Natural killer cell (primary cell): ENCODE measurements at regions of chr3 and their contacts with region 1.

Region 1: DNA sequence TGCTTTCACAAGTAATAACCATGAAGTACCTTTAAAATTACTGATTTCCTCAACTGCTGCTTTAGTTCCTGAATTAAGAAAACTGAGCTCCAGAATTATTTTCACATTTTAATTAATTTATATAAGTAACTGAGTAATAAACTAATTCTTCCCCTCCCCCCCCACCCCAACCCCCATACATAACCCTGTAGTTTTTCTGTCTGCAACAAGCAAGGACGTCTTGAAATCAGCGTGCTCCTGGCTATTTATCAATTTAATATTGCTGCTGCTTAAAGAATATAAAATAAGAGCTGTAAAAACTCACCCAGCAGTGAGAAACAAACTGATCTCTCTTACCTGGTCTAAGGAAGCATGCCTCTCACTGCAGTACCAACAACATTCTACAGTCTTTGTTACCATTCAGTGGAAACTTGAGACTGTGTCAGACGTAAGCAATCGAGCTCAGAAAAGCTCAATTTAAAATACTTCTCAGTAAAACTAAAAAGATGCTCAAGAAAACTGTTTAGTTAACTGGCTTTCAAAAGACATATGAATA is 121.0 kb downstream of the TFDP2 start:
- DNase-seq: peak in 1 of 2 donors; percentile 74
- ATAC-seq: peak; percentile 72 to 79 (median 73)
- H3K4me3 ChIP-seq: peak overlapping the region; percentile 42
- H3K4me3 Mint-ChIP-seq: peak overlapping the region; percentile 96
- H3K27ac ChIP-seq: peak overlapping the region; percentile 30
- H3K27ac Mint-ChIP-seq: peak overlapping the region; percentile 87 to 91
- H3K4me1 ChIP-seq: peaks cover 3% of the 10 kb centered on the region
- H3K4me1 Mint-ChIP-seq: peaks cover 32 to 41% of the 10 kb centered on the region in 2 donors
- H3K27me3 ChIP-seq: no peaks in the 10 kb centered on the region
- H3K27me3 Mint-ChIP-seq: no peaks in the 10 kb centered on the region
- CTCF ChIP-seq: no peak

Region 2: DNA sequence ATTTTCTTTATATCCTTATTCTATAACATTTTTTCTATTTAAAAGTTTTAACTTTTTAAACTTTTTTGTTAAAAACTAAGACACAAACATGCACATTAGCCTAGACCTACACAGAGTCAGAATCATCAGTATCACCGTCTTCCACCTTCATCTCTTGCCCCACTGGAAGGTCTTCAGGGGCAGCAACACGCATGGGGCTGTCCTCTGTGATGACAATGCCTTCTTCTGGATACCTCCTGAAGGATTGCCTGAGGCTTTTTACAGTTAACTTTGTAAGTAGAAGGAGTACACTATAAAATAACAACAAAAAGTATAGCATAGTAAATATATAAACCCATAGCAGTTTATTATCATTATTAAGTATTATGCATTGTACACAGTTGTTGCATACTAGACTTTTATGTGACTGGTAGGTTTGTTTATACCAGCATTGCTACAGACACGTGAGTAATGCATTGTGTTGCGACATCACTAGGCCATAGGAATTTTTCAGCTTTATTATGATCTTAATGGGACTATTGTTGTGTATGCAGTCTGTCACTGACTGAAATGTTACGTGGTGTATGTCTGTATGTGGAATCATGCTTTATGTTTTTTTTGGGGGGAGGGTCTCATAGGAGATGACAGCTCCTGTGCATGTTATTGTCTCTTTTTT is 133.7 kb before region 1 on chr3:
- intact Hi-C with region 1: no loop called
- DNase-seq: no peak
- ATAC-seq: no peak
- H3K4me3 ChIP-seq: no peak overlapping the region
- H3K4me3 Mint-ChIP-seq: no peak overlapping the region
- H3K27ac ChIP-seq: no peak overlapping the region
- H3K27ac Mint-ChIP-seq: no peak overlapping the region
- H3K4me1 ChIP-seq: no peaks in the 10 kb centered on the region
- H3K4me1 Mint-ChIP-seq: peaks cover 15 to 21% of the 10 kb centered on the region in 2 donors
- H3K27me3 ChIP-seq: no peaks in the 10 kb centered on the region
- H3K27me3 Mint-ChIP-seq: no peaks in the 10 kb centered on the region
- CTCF ChIP-seq: no peak

Region 3: GRCh38 chr3:142098964-142099363 is 70.7 kb after region 1 on chr3:
- intact Hi-C with region 1: loop called (anchors 2 kb)
- DNase-seq: no peak
- ATAC-seq: no peak
- H3K4me3 ChIP-seq: no peak overlapping the region
- H3K4me3 Mint-ChIP-seq: no peak overlapping the region
- H3K27ac ChIP-seq: no peak overlapping the region
- H3K27ac Mint-ChIP-seq: no peak overlapping the region
- H3K4me1 ChIP-seq: no peaks in the 10 kb centered on the region
- H3K4me1 Mint-ChIP-seq: peaks cover 23 to 32% of the 10 kb centered on the region in 2 donors
- H3K27me3 ChIP-seq: no peaks in the 10 kb centered on the region
- H3K27me3 Mint-ChIP-seq: no peaks in the 10 kb centered on the region
- CTCF ChIP-seq: no peak

Region 4: DNA sequence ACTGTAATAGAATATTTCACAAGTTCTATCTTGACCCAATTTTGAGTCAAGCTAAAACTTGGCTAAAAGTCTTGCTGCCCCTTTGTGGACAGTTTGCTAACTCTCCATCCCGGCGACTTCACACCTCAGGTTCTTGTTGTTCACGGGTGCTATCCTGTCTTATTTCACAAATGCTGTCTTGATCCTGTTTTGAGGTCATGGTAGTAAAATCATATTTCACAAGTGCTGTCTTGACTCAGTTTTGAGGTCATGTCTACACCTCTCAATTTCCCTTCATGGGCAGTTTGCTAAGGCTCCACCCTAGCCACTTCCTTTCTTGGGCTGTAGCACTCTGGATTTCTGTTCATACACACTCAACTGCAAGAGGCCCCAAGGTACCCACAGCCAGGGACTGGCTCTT is 242.1 kb after region 1 on chr3:
- intact Hi-C with region 1: loop called (anchors 1 kb)
- DNase-seq: peak; percentile 56 to 74
- ATAC-seq: peak; percentile 78 to 90 (median 86)
- H3K4me3 ChIP-seq: no peak overlapping the region
- H3K4me3 Mint-ChIP-seq: peak overlapping the region; percentile 38
- H3K27ac ChIP-seq: peak overlapping the region; percentile 83
- H3K27ac Mint-ChIP-seq: peak overlapping the region; percentile 83 to 87
- H3K4me1 ChIP-seq: peaks cover 39% of the 10 kb centered on the region
- H3K4me1 Mint-ChIP-seq: peaks cover 64 to 87% of the 10 kb centered on the region in 2 donors
- H3K27me3 ChIP-seq: no peaks in the 10 kb centered on the region
- H3K27me3 Mint-ChIP-seq: no peaks in the 10 kb centered on the region
- CTCF ChIP-seq: no peak